ENCODE measurements at regions of chrX and their contacts with region 1.

Region 1: GRCh38 chrX:43703211-43703791 is 47.2 kb downstream of the MAOA start:
- DNase-seq: no peak
- ATAC-seq: peak; percentile 64 to 82
- H3K4me3 ChIP-seq: no peak overlapping the region
- H3K27ac ChIP-seq: peak overlapping the region; percentile 96
- H3K4me1 ChIP-seq: peaks cover 9% of the 10 kb centered on the region
- H3K27me3 ChIP-seq: no peaks in the 10 kb centered on the region

Region 2: DNA sequence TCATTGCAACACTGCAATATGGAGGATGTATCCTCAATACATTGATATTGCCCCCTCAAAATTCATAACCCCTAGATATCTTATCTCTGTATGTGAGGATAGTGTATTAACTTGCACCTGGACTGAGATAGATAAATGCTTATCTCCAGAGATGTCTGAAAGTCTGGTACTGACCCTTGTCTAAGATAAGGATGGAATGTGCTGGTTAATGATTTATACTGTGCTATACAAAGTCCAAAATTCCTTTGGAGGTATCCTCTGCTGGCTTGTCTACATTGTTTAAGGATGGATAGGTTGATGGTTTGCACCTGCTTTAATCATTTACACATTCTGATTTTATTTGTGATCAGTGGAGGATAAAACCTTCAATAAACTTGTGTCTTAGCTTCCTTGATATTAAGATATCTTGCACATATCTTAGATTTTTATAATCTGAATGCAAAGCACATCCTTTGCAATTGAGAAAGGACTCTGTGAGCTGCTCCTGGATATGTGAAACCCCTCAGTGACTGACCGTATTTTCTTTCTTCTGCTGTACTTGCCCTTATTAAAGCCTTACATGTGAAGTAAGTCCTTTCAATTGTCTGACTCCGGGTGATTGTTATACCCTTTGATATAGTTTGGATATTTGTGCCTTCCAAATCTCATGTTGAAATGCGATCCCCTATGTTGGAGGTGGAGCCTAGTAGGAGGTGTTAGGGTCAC is 477.5 kb before region 1 on chrX:
- intact Hi-C with region 1: no loop called
- DNase-seq: no peak
- ATAC-seq: no peak
- H3K4me3 ChIP-seq: no peak overlapping the region
- H3K27ac ChIP-seq: no peak overlapping the region
- H3K4me1 ChIP-seq: no peaks in the 10 kb centered on the region
- H3K27me3 ChIP-seq: no peaks in the 10 kb centered on the region

Region 3: GRCh38 chrX:43448688-43449087 is 254.6 kb before region 1 on chrX:
- intact Hi-C with region 1: no loop called
- DNase-seq: no peak
- ATAC-seq: no peak
- H3K4me3 ChIP-seq: no peak overlapping the region
- H3K27ac ChIP-seq: no peak overlapping the region
- H3K4me1 ChIP-seq: no peaks in the 10 kb centered on the region
- H3K27me3 ChIP-seq: no peaks in the 10 kb centered on the region

Region 4: GRCh38 chrX:43654431-43655150 is 48.7 kb before region 1 on chrX:
- intact Hi-C with region 1: loop called in 2 of 4 experiments (anchors 10 kb)
- DNase-seq: peak; percentile 93 to 98 (median 97)
- ATAC-seq: peak; percentile 98 to 99
- H3K4me3 ChIP-seq: peak overlapping the region; percentile 84
- H3K27ac ChIP-seq: peak overlapping the region; percentile 99
- H3K4me1 ChIP-seq: no peaks in the 10 kb centered on the region
- H3K27me3 ChIP-seq: no peaks in the 10 kb centered on the region

Measured in right cardiac atrium (tissue), 5 donors.